WTC11 (cell line): ENCODE measurements at regions of chr9 and their contacts with region 1.

Region 1: GRCh38 chr9:34403554-34404380 is 27.1 kb upstream of the MYORG start:
- DNase-seq: peak; percentile 82
- ATAC-seq: peak; percentile 43
- H3K4me3 Mint-ChIP-seq: no peak overlapping the region
- H3K27ac Mint-ChIP-seq: no peak overlapping the region
- H3K4me1 Mint-ChIP-seq: no peaks in the 10 kb centered on the region
- H3K27me3 Mint-ChIP-seq: no peaks in the 10 kb centered on the region
- CTCF ChIP-seq: peak; percentile 98

Region 2: GRCh38 chr9:34376596-34377403 is 27.0 kb before region 1 on chr9 and contains the start of gene MYORG:
- CTCF ChIA-PET with region 1: interaction called, 20 read pairs
- POLR2A ChIA-PET with region 1: interaction called, 3 read pairs
- DNase-seq: peak; percentile 99
- ATAC-seq: peak; percentile 75
- H3K4me3 Mint-ChIP-seq: peak within 1 kb of the TSS; percentile 93
- H3K27ac Mint-ChIP-seq: peak within 1 kb of the TSS; percentile 82
- H3K4me1 Mint-ChIP-seq: peaks cover 36% of the 10 kb centered on the region
- H3K27me3 Mint-ChIP-seq: peaks cover 32% of the 10 kb centered on the region
- CTCF ChIP-seq: no peak
- total RNA-seq, gene MYORG: 9.3 to 18.9 TPM (median 9.7 TPM) in 3 replicates

Region 3: DNA sequence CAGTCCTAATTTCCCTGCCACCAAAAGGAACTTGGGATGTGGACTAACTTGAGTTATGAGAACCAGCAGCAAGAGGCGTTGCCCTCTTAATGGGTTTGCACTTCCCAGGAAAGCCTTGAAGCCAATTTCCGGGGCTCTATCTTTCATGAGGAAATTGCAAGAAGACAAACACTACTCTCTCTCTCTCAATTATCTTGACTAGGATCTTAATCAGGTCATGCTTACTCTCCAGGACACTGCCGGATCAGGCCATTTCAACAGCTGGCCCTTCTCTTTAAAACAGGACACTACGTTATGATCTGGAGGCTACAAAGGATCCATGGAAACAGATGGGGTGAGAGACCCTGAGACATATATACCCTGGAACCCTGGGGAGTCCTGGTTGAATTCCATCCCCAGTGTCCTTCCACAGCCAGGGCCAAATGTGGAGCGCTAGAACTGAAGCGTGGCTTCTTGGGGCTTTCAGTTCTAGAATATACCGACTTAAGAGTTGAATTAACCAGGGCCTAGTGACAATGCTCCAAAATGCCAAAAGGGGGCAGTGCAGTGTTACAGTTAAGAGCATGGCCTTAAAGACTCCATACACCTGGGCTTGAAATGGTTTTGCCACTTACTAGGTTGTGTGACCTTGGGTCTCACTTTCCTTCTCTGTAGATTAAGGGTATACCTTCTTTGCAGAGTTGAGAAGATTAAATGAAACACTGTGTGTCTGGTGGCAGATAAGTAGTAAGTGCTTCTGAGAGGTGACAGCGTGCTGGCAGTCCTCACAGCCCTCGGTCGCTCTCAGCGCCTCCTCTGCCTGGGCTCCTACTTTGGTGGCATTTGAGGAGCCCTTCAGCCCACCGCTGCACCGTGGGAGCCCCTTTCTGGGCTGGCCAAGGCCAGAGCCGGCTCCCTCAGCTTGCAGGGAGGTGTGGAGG is 33.5 kb after region 1 on chr9:
- CTCF ChIA-PET with region 1: interaction called, 32 read pairs
- POLR2A ChIA-PET with region 1: no interaction called
- DNase-seq: peak; percentile 71
- ATAC-seq: peak; percentile 97
- H3K4me3 Mint-ChIP-seq: no peak overlapping the region
- H3K27ac Mint-ChIP-seq: no peak overlapping the region
- H3K4me1 Mint-ChIP-seq: peaks cover 13% of the 10 kb centered on the region
- H3K27me3 Mint-ChIP-seq: no peaks in the 10 kb centered on the region
- CTCF ChIP-seq: peak; percentile 74

Region 4: DNA sequence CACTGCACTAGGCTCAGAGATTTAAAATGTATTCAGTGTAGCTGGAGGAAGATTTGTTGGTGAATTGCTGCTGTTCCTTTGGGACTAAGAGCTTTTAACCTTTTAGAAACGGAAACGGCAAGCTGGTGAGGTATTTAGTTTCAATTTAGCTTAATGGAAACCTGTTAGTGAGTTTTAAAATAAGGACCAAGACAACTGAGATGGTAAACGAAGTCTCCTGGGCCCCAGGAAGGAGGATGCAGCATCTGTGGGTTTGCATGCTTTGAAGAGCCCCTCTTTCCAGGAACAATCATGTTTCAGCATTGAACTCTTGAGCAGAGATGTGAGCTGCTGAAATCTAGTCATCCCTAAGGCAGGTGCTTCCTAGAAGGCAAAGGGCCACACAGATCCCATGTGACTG is 71.3 kb after region 1 on chr9:
- CTCF ChIA-PET with region 1: interaction called, 10 read pairs
- POLR2A ChIA-PET with region 1: no interaction called
- DNase-seq: no peak
- ATAC-seq: no peak
- H3K4me3 Mint-ChIP-seq: no peak overlapping the region
- H3K27ac Mint-ChIP-seq: no peak overlapping the region
- H3K4me1 Mint-ChIP-seq: peaks cover 4% of the 10 kb centered on the region; the same call in 1 of the 2 replicates
- H3K27me3 Mint-ChIP-seq: peaks cover 6% of the 10 kb centered on the region; the same call in 1 of the 2 replicates
- CTCF ChIP-seq: no peak

Region 5: GRCh38 chr9:34522971-34523797 is 119.4 kb after region 1 on chr9 and contains the start of gene ENHO:
- CTCF ChIA-PET with region 1: interaction called, 13 read pairs
- POLR2A ChIA-PET with region 1: no interaction called
- DNase-seq: peak; percentile 94
- ATAC-seq: peak; percentile 97
- H3K4me3 Mint-ChIP-seq: peak within 1 kb of the TSS; percentile 86
- H3K27ac Mint-ChIP-seq: no peak within 1 kb of the TSS; the same call in 1 of the 2 replicates
- H3K4me1 Mint-ChIP-seq: peaks cover 20% of the 10 kb centered on the region
- H3K27me3 Mint-ChIP-seq: peaks cover 44% of the 10 kb centered on the region
- CTCF ChIP-seq: no peak
- total RNA-seq, gene ENHO: 26.9 to 28.3 TPM (median 27.9 TPM) in 3 replicates

Region 6: GRCh38 chr9:34603610-34604231 is 200.0 kb after region 1 on chr9:
- CTCF ChIA-PET with region 1: interaction called, 24 read pairs
- POLR2A ChIA-PET with region 1: no interaction called
- DNase-seq: peak; percentile 96
- ATAC-seq: peak; percentile 93
- H3K4me3 Mint-ChIP-seq: no peak overlapping the region
- H3K27ac Mint-ChIP-seq: no peak overlapping the region
- H3K4me1 Mint-ChIP-seq: peaks cover 9% of the 10 kb centered on the region
- H3K27me3 Mint-ChIP-seq: no peaks in the 10 kb centered on the region; the same call in 1 of the 2 replicates
- CTCF ChIP-seq: peak; percentile 94